ENCODE measurements at regions of chr3 and their contacts with region 1.

Region 1: DNA sequence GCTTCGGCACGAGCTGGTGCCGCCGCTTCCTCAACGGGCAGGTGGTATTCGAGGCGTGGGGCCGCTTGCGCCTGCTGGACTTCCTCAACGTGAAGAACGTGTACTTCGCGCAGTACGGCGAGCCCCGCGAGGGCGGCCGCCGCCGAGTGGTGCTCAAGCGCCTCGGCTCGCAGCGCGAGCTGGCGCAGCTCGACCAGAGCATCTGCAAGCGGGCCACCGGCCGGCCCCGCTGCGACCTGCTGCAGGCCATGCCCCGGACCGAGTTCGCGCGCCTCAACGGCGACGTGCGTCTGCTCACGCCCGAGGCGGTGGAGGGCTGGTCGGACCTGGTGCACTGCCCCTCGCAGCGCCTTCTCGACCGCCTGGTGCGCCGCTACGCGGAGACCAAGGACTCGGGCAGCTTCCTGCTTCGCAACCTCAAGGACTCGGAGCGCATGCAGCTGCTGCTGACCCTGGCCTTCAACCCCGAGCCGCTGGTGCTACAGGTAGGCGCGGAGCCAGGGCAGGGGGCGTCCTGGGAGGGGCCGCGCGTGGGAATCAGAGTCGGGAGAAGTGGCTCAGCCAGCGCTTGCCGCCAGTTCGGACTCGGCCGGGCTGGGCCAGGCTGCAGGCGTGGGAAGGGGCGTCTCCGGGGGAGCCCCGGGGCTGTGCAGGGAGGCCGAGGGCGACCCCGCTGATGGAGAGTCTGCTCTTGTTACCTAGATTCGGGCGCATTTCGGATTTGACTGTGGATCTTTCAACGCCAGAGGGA is 1.1 kb downstream of the DIPK2A start:
- DNase-seq: peak; percentile 30

Region 2: DNA sequence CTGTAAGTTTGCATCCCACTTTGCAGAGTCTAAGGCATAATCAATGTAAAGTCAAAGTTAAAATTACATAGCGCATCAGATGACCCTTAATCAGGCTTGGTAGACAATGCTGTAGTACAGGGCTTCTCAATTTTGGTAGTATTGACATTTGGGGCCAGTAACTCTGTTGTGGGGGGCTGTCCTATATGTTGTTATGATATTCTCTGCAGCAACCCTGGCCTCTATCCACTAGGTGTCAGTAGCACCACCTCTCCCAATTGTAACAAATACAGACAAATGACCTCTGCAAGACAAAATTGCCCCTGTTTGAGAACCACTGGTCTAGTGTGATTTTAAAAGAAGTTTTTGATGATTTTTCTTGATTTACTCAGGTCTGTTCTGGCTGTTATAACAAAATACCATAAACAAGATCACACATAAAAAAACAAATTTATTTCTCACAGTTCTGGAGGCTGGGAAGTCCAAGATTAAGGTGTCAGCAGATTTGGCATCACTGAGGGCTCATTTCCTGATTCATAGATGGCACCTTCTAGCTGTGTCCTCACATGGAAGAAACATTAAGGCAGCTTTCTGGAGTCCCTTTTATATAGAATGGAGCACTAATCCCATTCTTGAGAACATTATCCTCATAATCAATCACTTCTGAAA is 86.8 kb before region 1 on chr3:
- CTCF ChIA-PET with region 1: no interaction called
- POLR2A ChIA-PET with region 1: interaction called, 12 read pairs
- DNase-seq: peak; percentile 42

Region 3: GRCh38 chr3:143895805-143896204 is 76.9 kb before region 1 on chr3:
- CTCF ChIA-PET with region 1: no interaction called
- POLR2A ChIA-PET with region 1: interaction called, 13 read pairs
- DNase-seq: no peak

Measured in HEK293T (cell line).